Naive thymus-derived CD4-positive, alpha-beta T cell (primary cell): ENCODE measurements at regions of chr6 and their contacts with region 1.

Region 1: GRCh38 chr6:106997390-106998158 is 23.0 kb upstream of the CD24 start:
- DNase-seq: peak in 8 of 9 donors; percentile 11 to 53 (median 39)
- ATAC-seq: peak; percentile 60
- H3K4me3 ChIP-seq: no peak overlapping the region
- H3K4me3 Mint-ChIP-seq: peak overlapping the region in 1 of 10 donors; percentile 26
- H3K27ac ChIP-seq: no peak overlapping the region
- H3K27ac Mint-ChIP-seq: peak overlapping the region in 1 of 9 donors; percentile 77
- H3K4me1 ChIP-seq: no peaks in the 10 kb centered on the region
- H3K4me1 Mint-ChIP-seq: peaks cover 4 to 7% (median 5%) of the 10 kb centered on the region in 7 donors
- H3K27me3 ChIP-seq: no peaks in the 10 kb centered on the region
- H3K27me3 Mint-ChIP-seq: peaks cover 0 to 1% (median 0%) of the 10 kb centered on the region in 5 donors

Region 2: GRCh38 chr6:106339334-106340029 is 658.1 kb before region 1 on chr6:
- CTCF ChIA-PET with region 1: interaction called, 3 read pairs
- POLR2A ChIA-PET with region 1: no interaction called
- intact Hi-C with region 1: loop called (anchors 1 to 5 kb)
- DNase-seq: peak in 8 of 9 donors; percentile 19 to 50 (median 35)
- ATAC-seq: peak; percentile 88
- H3K4me3 ChIP-seq: no peak overlapping the region
- H3K4me3 Mint-ChIP-seq: peak overlapping the region in 7 of 10 donors; percentile 15 to 67 (median 44)
- H3K27ac ChIP-seq: no peak overlapping the region
- H3K27ac Mint-ChIP-seq: no peak overlapping the region
- H3K4me1 ChIP-seq: no peaks in the 10 kb centered on the region
- H3K4me1 Mint-ChIP-seq: peaks cover 0 to 9% (median 6%) of the 10 kb centered on the region in 7 donors
- H3K27me3 ChIP-seq: no peaks in the 10 kb centered on the region
- H3K27me3 Mint-ChIP-seq: peaks cover 14 to 44% (median 20%) of the 10 kb centered on the region in 5 donors

Region 3: DNA sequence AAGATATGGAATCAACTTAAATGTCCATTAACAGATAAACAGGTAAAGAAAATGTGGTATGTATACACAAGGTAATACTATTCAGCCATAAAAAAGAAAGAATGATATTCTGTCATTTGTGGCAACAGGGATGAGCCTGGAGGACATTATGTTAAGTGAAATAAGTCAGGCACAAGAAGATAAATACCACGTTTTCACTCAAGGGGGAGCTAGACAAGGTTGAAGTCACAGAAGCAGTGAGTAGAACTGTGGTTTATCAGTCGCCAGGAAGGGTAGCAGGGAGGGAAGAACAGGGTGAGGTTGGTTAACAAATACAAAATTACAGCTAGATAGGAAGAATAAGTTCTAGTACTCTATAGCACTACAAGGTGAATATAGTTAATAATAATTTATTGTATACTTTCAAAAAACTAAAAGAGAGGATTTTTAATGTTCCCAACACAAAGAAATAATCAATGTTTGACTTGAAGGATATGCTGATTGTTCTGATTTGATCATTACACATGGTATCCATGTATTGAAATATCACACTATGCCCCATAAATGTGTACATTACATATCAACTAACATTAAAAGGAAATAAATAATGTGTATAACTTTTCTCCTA is 389.4 kb before region 1 on chr6:
- CTCF ChIA-PET with region 1: no interaction called
- POLR2A ChIA-PET with region 1: no interaction called
- intact Hi-C with region 1: loop called in 1 of 2 experiments (anchors 5 kb)
- DNase-seq: peak in 6 of 9 donors; percentile 15 to 48 (median 42)
- ATAC-seq: peak; percentile 83
- H3K4me3 ChIP-seq: no peak overlapping the region
- H3K4me3 Mint-ChIP-seq: no peak overlapping the region
- H3K27ac ChIP-seq: no peak overlapping the region
- H3K27ac Mint-ChIP-seq: no peak overlapping the region
- H3K4me1 ChIP-seq: no peaks in the 10 kb centered on the region
- H3K4me1 Mint-ChIP-seq: peaks cover 0 to 12% (median 4%) of the 10 kb centered on the region in 7 donors
- H3K27me3 ChIP-seq: no peaks in the 10 kb centered on the region
- H3K27me3 Mint-ChIP-seq: no peaks in the 10 kb centered on the region

Region 4: DNA sequence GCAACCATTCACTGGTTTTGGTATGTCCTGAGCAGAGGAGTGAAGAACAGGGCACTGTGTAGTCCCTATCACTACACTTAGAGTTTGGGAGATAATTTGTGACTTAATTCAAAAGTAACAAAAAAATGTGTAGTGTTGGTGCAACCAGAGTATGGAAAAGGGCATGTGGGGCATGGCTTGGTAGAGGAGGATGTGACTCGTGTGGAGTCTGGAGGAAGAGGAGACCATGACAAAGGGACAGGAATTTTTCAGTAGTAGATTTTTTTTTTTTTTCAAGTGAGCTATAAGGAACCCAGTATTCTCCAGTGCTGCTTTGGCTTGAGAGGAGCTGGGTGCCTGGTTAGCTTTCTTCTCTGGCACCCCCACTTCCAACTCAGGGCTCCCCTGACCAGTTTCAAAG is 35.6 kb after region 1 on chr6:
- CTCF ChIA-PET with region 1: no interaction called
- POLR2A ChIA-PET with region 1: no interaction called
- intact Hi-C with region 1: no loop called
- DNase-seq: no peak
- ATAC-seq: no peak
- H3K4me3 ChIP-seq: no peak overlapping the region
- H3K4me3 Mint-ChIP-seq: no peak overlapping the region
- H3K27ac ChIP-seq: no peak overlapping the region
- H3K27ac Mint-ChIP-seq: peak overlapping the region in 1 of 9 donors; percentile 24
- H3K4me1 ChIP-seq: peaks cover 3 to 17% of the 10 kb centered on the region in 2 donors
- H3K4me1 Mint-ChIP-seq: peaks cover 22 to 56% (median 46%) of the 10 kb centered on the region in 7 donors
- H3K27me3 ChIP-seq: no peaks in the 10 kb centered on the region
- H3K27me3 Mint-ChIP-seq: no peaks in the 10 kb centered on the region

Region 5: DNA sequence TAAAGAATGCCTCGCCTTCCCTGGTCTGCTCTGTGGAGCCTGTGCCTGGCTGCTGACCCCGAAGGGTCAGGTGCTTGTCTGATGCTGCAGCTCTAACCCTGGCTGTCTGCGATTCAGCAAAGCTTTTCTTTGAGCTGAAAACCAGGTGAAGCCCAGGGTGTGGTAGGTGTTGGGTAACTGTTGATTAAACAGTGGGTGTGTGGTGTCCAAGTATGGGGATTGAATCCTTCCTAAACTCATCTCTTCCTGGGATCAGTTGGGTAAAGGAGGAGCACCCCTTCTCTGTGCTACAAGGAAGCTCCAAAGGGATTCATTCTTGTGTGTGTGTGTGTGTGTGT is 49.0 kb after region 1 on chr6:
- CTCF ChIA-PET with region 1: no interaction called
- POLR2A ChIA-PET with region 1: no interaction called
- intact Hi-C with region 1: no loop called
- DNase-seq: no peak
- ATAC-seq: no peak
- H3K4me3 ChIP-seq: no peak overlapping the region
- H3K4me3 Mint-ChIP-seq: no peak overlapping the region
- H3K27ac ChIP-seq: no peak overlapping the region
- H3K27ac Mint-ChIP-seq: peak overlapping the region in 2 of 9 donors; percentile 24 to 62
- H3K4me1 ChIP-seq: no peaks in the 10 kb centered on the region
- H3K4me1 Mint-ChIP-seq: peaks cover 0 to 13% (median 0%) of the 10 kb centered on the region in 7 donors
- H3K27me3 ChIP-seq: no peaks in the 10 kb centered on the region
- H3K27me3 Mint-ChIP-seq: no peaks in the 10 kb centered on the region

Region 6: DNA sequence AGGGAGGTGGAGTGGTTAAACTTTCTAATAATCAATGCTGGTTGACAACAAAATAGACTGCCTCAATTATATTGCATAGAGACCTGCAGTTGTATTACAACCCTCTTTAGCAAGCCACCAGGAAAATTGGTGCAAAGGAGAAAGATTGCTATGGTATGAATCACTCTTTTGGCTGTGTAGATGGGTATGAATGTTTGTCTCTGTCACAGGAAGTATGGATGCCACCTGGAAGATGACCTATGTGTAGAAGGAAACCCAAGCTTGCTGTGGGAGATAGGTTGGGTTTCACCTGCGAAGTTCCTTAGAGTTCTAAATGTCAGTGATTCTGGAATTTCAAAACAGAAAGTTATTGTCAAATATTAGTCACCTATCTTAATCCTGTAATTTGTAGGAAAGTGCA is 627.0 kb after region 1 on chr6:
- CTCF ChIA-PET with region 1: no interaction called
- POLR2A ChIA-PET with region 1: no interaction called
- intact Hi-C with region 1: no loop called
- DNase-seq: no peak
- ATAC-seq: no peak
- H3K4me3 ChIP-seq: no peak overlapping the region
- H3K4me3 Mint-ChIP-seq: no peak overlapping the region
- H3K27ac ChIP-seq: no peak overlapping the region
- H3K27ac Mint-ChIP-seq: no peak overlapping the region
- H3K4me1 ChIP-seq: peaks cover 0 to 2% of the 10 kb centered on the region in 2 donors
- H3K4me1 Mint-ChIP-seq: peaks cover 5 to 22% (median 17%) of the 10 kb centered on the region in 7 donors
- H3K27me3 ChIP-seq: no peaks in the 10 kb centered on the region
- H3K27me3 Mint-ChIP-seq: peaks cover 0 to 38% (median 0%) of the 10 kb centered on the region in 5 donors